ENCODE measurements at regions of chr2 and their contacts with region 1.

Region 1: DNA sequence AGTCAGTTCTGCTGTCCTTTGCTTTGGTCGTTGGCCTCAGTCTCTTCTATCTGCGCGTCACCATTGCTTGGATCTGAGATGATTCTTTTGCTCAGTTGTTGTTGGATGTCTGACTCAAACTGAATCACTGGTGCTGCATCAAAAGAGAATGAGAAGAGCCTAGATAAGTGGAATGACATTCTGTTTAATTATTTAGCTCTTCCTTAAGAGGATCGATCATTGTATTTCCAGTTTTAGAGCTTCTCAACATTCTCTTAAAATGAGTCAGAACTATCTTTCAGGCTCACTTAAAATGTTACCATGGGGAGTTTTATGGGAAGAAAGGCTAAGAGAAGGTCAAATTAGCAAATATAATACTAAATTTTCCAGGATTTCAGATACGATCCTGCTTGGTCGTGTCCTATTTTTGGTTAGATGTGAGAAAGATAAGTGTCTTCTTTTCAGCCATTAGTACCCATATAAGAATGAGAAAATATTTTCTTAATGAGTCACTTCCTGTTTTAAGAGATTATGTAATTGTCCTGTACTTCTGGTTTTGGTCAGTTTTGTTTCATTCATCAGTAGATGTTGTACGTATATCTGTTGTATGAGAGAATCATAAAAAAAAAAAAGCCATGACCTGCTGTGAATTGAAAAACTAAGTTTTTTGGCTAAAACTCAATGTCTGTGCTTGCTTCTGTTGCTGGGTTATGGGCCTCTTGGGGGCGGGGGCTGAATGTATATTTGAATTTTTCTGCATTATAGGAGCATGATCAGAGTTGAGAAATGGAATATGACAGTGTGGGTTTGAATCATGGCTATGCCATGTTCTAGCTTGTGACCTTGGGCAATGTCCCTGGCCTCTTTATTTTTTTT is 31.6 kb upstream of the CASP10 start:
- DNase-seq: peak; percentile 63
- CTCF ChIP-seq: no peak

Region 2: GRCh38 chr2:201118121-201118960 is 33.0 kb before region 1 on chr2:
- CTCF ChIA-PET with region 1: interaction called, 12 read pairs
- POLR2A ChIA-PET with region 1: interaction called, 5 read pairs
- DNase-seq: peak; percentile 73
- CTCF ChIP-seq: peak; percentile 39

Region 3: DNA sequence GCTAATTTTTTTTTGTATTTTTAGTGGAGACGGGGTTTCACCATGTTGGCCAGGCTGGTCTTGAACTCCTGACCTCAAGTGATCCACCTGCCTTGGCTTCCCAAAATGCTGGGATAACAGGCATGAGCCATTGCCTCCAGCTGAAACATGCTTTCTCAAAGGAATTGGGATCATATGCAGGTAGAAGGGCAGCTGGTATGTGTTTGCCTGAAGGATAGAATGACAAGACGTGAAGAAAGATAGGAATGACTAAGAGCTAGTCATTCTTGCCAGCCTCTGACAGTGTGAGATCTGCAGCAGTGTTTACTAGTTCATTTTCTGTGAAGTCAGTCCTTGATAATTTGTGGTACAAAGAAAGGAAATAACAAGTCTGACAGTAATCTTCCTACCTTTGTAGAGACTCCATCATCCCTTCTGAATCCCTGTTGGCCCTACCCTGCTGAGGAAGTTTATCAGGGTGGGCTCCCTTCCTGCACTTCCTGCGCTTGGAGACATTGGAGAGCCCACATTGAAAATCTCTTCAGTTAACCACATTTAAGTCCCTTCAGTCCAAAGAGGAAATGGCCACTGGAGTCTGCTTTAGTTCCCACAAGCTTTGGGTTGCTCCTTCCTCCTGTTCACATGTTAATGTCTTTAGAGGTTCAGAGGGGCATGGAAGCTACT is 20.7 kb before region 1 on chr2:
- CTCF ChIA-PET with region 1: interaction called, 6 read pairs
- POLR2A ChIA-PET with region 1: interaction called, 10 read pairs
- DNase-seq: no peak
- CTCF ChIP-seq: no peak